Pancreas (tissue), 10 donors: ENCODE measurements at regions of chr16 and their contacts with region 1.

Region 1: DNA sequence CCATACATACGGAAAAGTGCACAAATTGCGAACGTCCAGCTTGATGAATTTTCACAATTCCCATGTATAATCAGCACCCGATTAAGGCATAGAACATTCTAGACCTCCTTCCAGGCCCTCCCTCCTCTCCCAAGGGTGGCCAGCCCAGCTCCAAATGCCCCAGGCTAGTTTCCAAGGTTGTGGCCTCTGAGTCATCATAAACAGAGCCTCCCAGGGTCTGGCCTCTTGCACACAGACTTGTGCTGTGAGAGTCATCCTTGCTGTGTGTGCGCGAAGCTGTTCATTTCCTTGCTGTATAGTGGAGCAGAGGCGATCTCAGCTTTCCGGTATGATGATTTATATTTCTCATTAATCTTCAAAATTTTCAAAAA is 20.5 kb upstream of the JPH3 start:
- DNase-seq: peak in 4 of 6 donors; percentile 32 to 46 (median 40)
- ATAC-seq: peak; percentile 72 to 89 (median 84)
- H3K4me3 ChIP-seq: no peak overlapping the region
- H3K27ac ChIP-seq: peak overlapping the region; percentile 44 to 74 (median 60)
- H3K4me1 ChIP-seq: no peaks in the 10 kb centered on the region
- H3K27me3 ChIP-seq: no peaks in the 10 kb centered on the region
- CTCF ChIP-seq: no peak

Region 2: GRCh38 chr16:87621976-87622713 is 40.3 kb after region 1 on chr16:
- intact Hi-C with region 1: no loop called
- DNase-seq: no peak
- ATAC-seq: no peak
- H3K4me3 ChIP-seq: no peak overlapping the region
- H3K27ac ChIP-seq: no peak overlapping the region
- H3K4me1 ChIP-seq: no peaks in the 10 kb centered on the region
- H3K27me3 ChIP-seq: no peaks in the 10 kb centered on the region
- CTCF ChIP-seq: no peak

Region 3: DNA sequence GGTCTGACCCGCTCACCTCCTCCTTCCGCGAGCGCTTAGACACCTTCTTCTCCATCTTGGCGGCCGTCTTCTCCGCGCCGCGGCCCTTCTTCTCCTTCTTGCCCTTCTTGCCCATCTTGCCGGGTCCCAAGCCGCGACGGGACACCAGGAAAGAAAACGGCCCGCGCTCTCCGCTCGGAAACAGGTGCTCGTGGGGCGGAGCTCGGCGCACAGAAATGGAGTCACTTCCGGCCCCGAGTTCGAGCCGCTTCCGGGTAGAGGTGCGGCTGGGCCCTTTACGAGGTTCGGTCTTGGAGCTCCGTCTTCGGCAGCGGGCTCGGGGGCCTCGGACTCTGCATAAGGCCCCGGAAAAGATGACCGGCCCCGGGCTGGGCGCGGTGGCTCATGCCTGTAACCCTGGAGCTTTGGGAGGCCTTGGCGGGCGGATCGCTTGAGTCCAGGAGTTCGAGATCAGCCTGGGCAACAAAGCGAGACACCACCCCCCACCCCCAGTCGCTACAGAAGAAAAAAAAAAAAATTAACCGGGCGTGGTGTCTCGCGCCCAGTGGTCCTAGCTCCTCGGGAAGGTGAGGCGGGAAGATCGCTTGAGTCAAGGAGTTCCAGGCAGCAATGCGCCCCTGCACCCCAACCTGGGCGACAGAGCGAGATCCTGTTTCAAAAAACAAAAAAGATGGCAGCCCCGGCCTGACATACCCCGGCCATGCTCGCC is 184.1 kb after region 1 on chr16 and contains the start of gene KLHDC4:
- intact Hi-C with region 1: loop called in 1 of 3 experiments (anchors 10 kb)
- DNase-seq: peak; percentile 85 to 95 (median 88)
- ATAC-seq: peak; percentile 96 to 99 (median 96)
- H3K4me3 ChIP-seq: peak within 1 kb of the TSS; percentile 69 to 100 (median 84)
- H3K27ac ChIP-seq: peak within 1 kb of the TSS; percentile 78 to 89 (median 84)
- H3K4me1 ChIP-seq: peaks cover 0 to 10% (median 5%) of the 10 kb centered on the region in 3 donors
- H3K27me3 ChIP-seq: no peaks in the 10 kb centered on the region
- CTCF ChIP-seq: no peak
- total RNA-seq, gene KLHDC4: 15.5 to 27.3 (median 25.2) TPM

Region 4: GRCh38 chr16:88713568-88714419 is 1132.0 kb after region 1 on chr16:
- intact Hi-C with region 1: no loop called
- DNase-seq: no peak
- ATAC-seq: peak in 1 of 4 donors; percentile 33
- H3K4me3 ChIP-seq: no peak overlapping the region
- H3K27ac ChIP-seq: no peak overlapping the region
- H3K4me1 ChIP-seq: no peaks in the 10 kb centered on the region
- H3K27me3 ChIP-seq: no peaks in the 10 kb centered on the region
- CTCF ChIP-seq: no peak